ENCODE measurements at regions of chr5 and their contacts with region 1.

Region 1: GRCh38 chr5:170638454-170639220 is 134.8 kb downstream of the KCNIP1 start:
- DNase-seq: peak in 8 of 10 donors; percentile 67 to 94 (median 84)

Region 2: DNA sequence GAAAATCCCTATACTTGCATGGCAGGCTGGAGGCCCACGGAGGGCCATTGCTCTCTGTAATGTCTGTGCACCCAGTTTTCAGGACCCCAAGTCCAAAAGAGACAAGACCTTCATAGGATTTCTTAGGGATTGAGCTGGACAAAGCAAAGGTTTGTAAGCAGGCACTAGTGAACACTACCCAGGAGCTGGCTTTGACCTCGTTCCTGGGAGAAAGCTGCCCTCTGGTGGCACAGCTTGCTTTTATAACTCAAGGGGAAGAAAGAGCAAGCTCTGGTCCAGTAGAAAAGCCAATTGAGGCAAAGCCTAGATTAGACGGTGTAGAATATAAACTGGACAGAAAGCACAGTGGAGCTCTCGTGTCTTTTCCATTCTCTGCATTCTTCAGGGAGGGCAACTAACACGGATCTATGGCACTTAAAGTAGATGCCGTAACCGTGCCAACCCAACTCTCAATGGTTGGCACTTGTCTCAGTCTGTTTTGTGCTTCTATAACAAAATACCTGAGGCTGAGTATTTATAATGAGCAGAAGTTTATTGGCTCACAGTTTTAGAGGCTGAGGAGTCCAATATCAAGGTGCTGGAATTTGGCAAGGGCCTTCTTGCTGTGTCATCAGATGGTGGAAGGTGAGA is 152.8 kb after region 1 on chr5:
- intact Hi-C with region 1: loop called (anchors 5 kb)
- DNase-seq: peak in 7 of 10 donors; percentile 35 to 93 (median 67)

Region 3: GRCh38 chr5:170917113-170917512 is 278.5 kb after region 1 on chr5:
- intact Hi-C with region 1: no loop called
- DNase-seq: no peak

Region 4: GRCh38 chr5:171342362-171343111 is 703.9 kb after region 1 on chr5:
- intact Hi-C with region 1: loop called (anchors 5 kb)
- DNase-seq: peak in 4 of 10 donors; percentile 16 to 75 (median 34)